AG04450 (cell line): ENCODE measurements at regions of chr14 and their contacts with region 1.

Region 1: GRCh38 chr14:81147140-81147897 is 73.4 kb downstream of the GTF2A1 start:
- DNase-seq: no peak
- H3K4me3 ChIP-seq: no peak overlapping the region
- H3K27ac ChIP-seq: no peak overlapping the region
- H3K27me3 ChIP-seq: no peaks in the 10 kb centered on the region
- CTCF ChIP-seq: no peak

Region 2: DNA sequence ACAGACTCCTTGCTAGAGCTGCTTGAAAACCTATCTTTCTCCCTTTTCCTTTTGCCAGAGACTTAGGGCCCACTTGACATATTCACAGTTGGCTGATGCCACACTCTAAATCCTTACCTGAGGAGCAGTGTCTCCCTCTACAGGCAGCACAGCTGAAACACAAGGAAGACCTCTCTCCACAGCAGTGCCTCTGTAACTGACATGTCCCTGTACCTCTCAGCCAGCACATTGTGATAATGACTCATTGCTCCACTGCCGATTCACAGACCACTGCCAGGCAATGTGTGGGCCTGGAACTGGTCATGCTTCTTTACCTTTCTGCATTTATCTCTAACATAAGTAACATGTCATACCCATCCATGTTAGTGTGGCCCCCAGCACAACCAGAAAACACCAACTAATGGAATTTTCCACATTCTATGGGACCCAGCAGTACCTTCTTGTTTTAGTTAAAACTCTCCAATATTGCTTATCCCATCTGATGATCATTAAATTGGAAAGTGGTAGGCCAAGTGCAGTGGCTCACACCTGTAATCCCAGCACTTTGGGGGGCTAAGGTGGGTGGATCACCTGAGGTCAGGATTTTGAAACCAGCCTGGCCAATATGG is 17.0 kb after region 1 on chr14:
- CTCF ChIA-PET with region 1: interaction called, 13 read pairs
- POLR2A ChIA-PET with region 1: no interaction called
- DNase-seq: peak; percentile 15
- H3K4me3 ChIP-seq: no peak overlapping the region
- H3K27ac ChIP-seq: no peak overlapping the region
- H3K27me3 ChIP-seq: no peaks in the 10 kb centered on the region
- CTCF ChIP-seq: peak; percentile 67